ENCODE measurements at regions of chr19 and their contacts with region 1.

Region 1: GRCh38 chr19:6424939-6425731 is 524 bp upstream of the KHSRP start:
- DNase-seq: peak; percentile 100
- ATAC-seq: peak; percentile 92 to 95
- H3K4me3 ChIP-seq: peak overlapping the region; percentile 36 to 81 (median 44)
- H3K27ac ChIP-seq: peak overlapping the region; percentile 84 to 91 (median 86)
- H3K4me1 ChIP-seq: peaks cover 20 to 24% of the 10 kb centered on the region in 2 donors
- H3K27me3 ChIP-seq: no peaks in the 10 kb centered on the region
- CTCF ChIP-seq: peak in 1 of 5 experiments; percentile 13
- POLR2A ChIP-seq: no peak

Region 2: DNA sequence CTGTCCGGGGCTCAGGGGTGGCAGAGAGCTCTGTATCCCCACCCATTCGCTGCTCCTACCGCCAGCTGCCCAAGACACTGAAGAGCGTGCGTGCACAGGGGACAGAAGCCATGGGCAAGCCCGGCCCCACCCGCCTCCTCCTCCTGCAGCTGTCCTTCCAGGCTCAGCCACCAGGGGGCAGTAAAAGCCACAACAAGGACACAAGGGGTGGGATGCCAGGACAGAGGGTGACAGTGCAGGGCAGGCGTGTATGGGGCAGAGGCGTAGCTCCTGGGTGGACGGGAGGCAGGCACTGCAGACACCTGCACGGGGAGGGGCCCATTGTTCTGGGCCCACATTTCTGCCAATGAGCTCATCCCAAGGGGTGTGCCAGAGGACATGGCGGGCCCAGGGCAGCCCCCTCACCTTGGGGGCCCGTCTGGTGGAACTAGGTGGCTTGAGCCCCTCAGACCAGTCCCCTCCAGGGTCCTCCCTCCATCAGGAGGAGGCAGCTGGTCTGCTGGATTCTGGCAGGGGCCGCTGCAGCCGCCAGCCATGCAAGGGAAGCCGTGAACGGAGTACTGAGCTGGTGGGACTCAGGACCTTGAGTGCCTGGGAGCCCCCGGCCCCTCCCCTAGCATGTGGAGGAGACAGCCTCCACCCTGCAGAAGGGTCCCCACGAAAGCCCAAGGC is 206.5 kb before region 1 on chr19:
- in situ Hi-C with region 1: no loop called
- intact Hi-C with region 1: loop called (anchors 10 kb)
- DNase-seq: peak; percentile 73 to 92
- ATAC-seq: peak; percentile 53 to 73
- H3K4me3 ChIP-seq: no peak overlapping the region
- H3K27ac ChIP-seq: peak overlapping the region in 2 of 4 donors; percentile 23 to 51
- H3K4me1 ChIP-seq: peaks cover 46 to 50% of the 10 kb centered on the region in 2 donors
- H3K27me3 ChIP-seq: no peaks in the 10 kb centered on the region
- CTCF ChIP-seq: peak; percentile 96 to 99 (median 98)
- POLR2A ChIP-seq: no peak

Region 3: GRCh38 chr19:6362027-6362350 is 63.1 kb before region 1 on chr19:
- in situ Hi-C with region 1: no loop called
- intact Hi-C with region 1: loop called (anchors 1 kb)
- DNase-seq: no peak
- ATAC-seq: no peak
- H3K4me3 ChIP-seq: peak overlapping the region; percentile 78 to 87 (median 86)
- H3K27ac ChIP-seq: peak overlapping the region; percentile 84 to 88 (median 86)
- H3K4me1 ChIP-seq: peaks cover 9 to 11% of the 10 kb centered on the region in 2 donors
- H3K27me3 ChIP-seq: no peaks in the 10 kb centered on the region
- CTCF ChIP-seq: no peak
- POLR2A ChIP-seq: no peak

Region 4: GRCh38 chr19:6393074-6393983 is 31.8 kb before region 1 on chr19 and contains the start of gene GTF2F1:
- in situ Hi-C with region 1: no loop called
- intact Hi-C with region 1: loop called (anchors 1 kb)
- DNase-seq: peak; percentile 80 to 83
- ATAC-seq: peak; percentile 97
- H3K4me3 ChIP-seq: peak within 1 kb of the TSS; percentile 68 to 97 (median 90)
- H3K27ac ChIP-seq: peak within 1 kb of the TSS; percentile 83 to 93 (median 88)
- H3K4me1 ChIP-seq: peaks cover 6 to 15% of the 10 kb centered on the region in 2 donors
- H3K27me3 ChIP-seq: no peaks in the 10 kb centered on the region
- CTCF ChIP-seq: peak in 1 of 5 experiments; percentile 8
- POLR2A ChIP-seq: peak in 1 of 2 donors; percentile 18
- total RNA-seq, gene GTF2F1: 11.4 to 34.8 (median 22.4) TPM

Region 5: DNA sequence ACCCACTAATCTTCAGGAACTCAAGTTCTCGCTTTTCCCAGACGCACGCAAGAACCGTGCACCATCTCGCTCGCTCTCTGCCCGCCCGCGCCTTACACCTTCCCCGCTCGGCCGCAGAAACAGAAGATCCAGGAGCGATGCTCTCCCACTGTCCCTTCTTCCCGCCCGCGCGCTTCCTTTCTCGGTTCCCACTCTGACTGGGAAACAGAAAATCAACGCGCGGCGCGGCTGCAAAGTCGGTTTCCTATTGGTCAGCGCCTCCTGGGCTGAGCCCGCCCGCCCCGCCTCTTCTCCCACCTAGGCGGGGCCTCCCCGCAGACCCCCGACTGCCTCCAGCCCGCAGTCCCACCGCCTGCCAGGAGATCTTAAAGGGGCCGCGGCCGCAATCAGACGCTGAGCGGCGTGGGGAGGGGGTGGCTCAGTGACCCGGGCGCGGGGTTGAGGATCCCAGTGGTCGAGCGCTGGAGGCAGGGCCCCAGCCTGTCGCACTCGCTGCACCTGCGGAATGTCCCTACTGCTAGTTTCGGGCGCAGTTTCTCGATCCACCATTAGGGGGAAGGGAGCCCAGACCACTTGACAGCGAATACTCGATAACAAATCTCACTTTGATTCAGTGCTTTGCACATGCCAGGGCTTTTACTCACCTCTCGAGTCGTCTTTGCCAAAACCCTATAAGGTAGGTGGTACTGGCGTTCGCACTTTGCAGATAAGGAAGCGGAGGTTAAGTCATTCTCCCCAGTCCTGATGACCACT is 35.1 kb after region 1 on chr19:
- in situ Hi-C with region 1: no loop called
- intact Hi-C with region 1: loop called (anchors 1 kb)
- DNase-seq: peak; percentile 90 to 94
- ATAC-seq: peak; percentile 94 to 95
- H3K4me3 ChIP-seq: peak overlapping the region; percentile 64 to 82 (median 71)
- H3K27ac ChIP-seq: peak overlapping the region; percentile 78 to 81 (median 80)
- H3K4me1 ChIP-seq: peaks cover 5 to 14% of the 10 kb centered on the region in 2 donors
- H3K27me3 ChIP-seq: peaks cover 18 to 23% (median 21%) of the 10 kb centered on the region in 3 donors
- CTCF ChIP-seq: peak in 4 of 5 experiments; percentile 58 to 79 (median 74)
- POLR2A ChIP-seq: no peak

Measured in gastrocnemius medialis (tissue), 4 donors.